ENCODE measurements at regions of chr13 and their contacts with region 1.

Region 1: GRCh38 chr13:40190641-40191100 is 475.8 kb downstream of the FOXO1 start:
- DNase-seq: peak; percentile 85
- ATAC-seq: peak; percentile 38
- H3K4me3 Mint-ChIP-seq: peak overlapping the region; percentile 15
- H3K27ac Mint-ChIP-seq: peak overlapping the region; percentile 92
- H3K4me1 Mint-ChIP-seq: peaks cover 69% of the 10 kb centered on the region
- H3K27me3 Mint-ChIP-seq: no peaks in the 10 kb centered on the region
- CTCF ChIP-seq: no peak

Region 2: DNA sequence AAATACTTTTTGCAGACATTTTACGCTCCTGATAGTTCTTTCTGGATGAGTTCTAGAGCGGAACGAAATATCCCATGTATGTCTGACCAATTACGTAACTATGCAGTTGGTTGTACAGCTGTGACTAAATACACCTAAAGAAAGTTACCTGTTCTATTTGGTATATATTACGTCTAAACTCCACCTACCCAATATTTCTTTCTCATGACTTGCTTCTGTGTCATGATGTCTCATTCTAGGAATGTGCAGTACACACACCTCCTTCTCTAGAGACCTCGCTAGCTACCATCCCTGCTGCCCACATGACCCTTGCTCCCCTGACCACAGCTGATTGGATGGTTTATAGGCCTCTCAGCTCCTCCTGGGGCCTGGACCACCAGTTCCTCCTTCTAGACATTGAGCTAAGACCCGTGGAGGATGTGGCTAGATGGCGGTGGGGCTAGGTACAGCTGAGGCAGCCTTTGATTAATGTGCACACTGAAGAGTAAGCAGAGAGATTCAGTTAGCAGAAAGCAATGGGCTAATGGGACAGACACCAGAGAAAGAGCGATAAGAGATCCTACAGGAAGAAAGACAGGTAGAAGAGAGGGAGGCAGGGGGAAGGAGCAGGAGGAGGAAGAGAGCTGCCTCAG is 113.2 kb before region 1 on chr13:
- CTCF ChIA-PET with region 1: no interaction called
- POLR2A ChIA-PET with region 1: no interaction called
- intact Hi-C with region 1: no loop called
- DNase-seq: no peak
- ATAC-seq: peak; percentile 27
- H3K4me3 Mint-ChIP-seq: no peak overlapping the region
- H3K27ac Mint-ChIP-seq: no peak overlapping the region
- H3K4me1 Mint-ChIP-seq: peaks cover 12% of the 10 kb centered on the region
- H3K27me3 Mint-ChIP-seq: no peaks in the 10 kb centered on the region
- CTCF ChIP-seq: no peak

Region 3: GRCh38 chr13:40206241-40207000 is 15.8 kb after region 1 on chr13:
- CTCF ChIA-PET with region 1: interaction called, 41 read pairs
- POLR2A ChIA-PET with region 1: interaction called, 5 read pairs
- intact Hi-C with region 1: no loop called
- DNase-seq: peak; percentile 58
- ATAC-seq: peak; percentile 86
- H3K4me3 Mint-ChIP-seq: peak overlapping the region; percentile 30
- H3K27ac Mint-ChIP-seq: peak overlapping the region; percentile 99
- H3K4me1 Mint-ChIP-seq: peaks cover 53% of the 10 kb centered on the region
- H3K27me3 Mint-ChIP-seq: no peaks in the 10 kb centered on the region
- CTCF ChIP-seq: no peak

Measured in activated CD8-positive, alpha-beta T cell treated with anti-CD3 and anti-CD28 coated beads for 36 hours (primary cell).